Colonic mucosa (tissue), 4 donors: ENCODE measurements at regions of chr1 and their contacts with region 1.

Region 1: GRCh38 chr1:85692730-85693314 is 15.4 kb downstream of the ZNHIT6 start:
- DNase-seq: no peak
- H3K4me3 ChIP-seq: no peak overlapping the region
- H3K27ac ChIP-seq: no peak overlapping the region
- H3K4me1 ChIP-seq: no peaks in the 10 kb centered on the region
- H3K27me3 ChIP-seq: no peaks in the 10 kb centered on the region
- CTCF ChIP-seq: peak; percentile 28

Region 2: DNA sequence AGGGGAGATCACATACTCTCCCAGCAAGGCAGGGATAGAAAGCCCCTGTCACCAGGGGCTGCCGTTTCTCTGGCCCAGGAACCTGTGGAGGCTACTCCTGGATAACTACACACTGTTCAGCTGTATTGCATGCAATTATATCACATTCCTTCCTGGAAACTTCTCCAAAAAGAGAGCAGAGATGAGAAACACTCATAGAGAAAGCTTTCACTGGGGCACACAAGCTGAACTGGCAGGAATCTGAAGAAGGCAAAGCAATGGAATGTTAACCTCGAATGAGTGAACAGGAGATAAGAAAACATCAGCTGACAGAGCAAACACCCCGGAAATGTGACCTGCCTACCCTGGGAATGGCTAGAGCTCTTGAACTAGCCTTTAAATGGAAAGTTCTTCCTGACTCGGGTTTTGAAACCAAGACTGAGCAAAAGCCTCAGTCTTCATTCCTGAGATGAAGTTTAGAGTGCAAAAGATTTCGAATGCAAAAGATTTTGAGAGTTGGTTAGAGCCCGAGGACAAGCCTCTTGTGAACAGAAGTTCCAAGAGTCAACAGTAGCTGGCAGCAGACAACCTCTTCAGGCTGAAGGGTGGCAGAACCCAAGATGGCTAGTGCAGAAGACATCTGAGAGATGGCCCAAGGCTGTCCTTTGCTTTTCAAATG is 80.0 kb before region 1 on chr1:
- intact Hi-C with region 1: loop called (anchors 5 kb)
- DNase-seq: no peak
- H3K4me3 ChIP-seq: no peak overlapping the region
- H3K27ac ChIP-seq: no peak overlapping the region
- H3K4me1 ChIP-seq: no peaks in the 10 kb centered on the region
- H3K27me3 ChIP-seq: no peaks in the 10 kb centered on the region
- CTCF ChIP-seq: peak; percentile 53